ENCODE measurements at regions of chr9 and their contacts with region 1.

Region 1: GRCh38 chr9:3240656-3241268 is 285.0 kb downstream of the RFX3 start:
- DNase-seq: peak; percentile 34 to 72 (median 62)
- H3K4me3 ChIP-seq: peak overlapping the region in 1 of 3 experiments; percentile 10
- H3K4me3 Mint-ChIP-seq: peak overlapping the region in 1 of 2 donors; percentile 52
- H3K27ac ChIP-seq: peak overlapping the region in 1 of 2 donors; percentile 1
- H3K27ac Mint-ChIP-seq: peak overlapping the region in 4 of 7 donors; percentile 1 to 55 (median 32)
- H3K4me1 ChIP-seq: peaks cover 39 to 46% of the 10 kb centered on the region in 2 donors
- H3K4me1 Mint-ChIP-seq: peaks cover 50% of the 10 kb centered on the region
- H3K27me3 ChIP-seq: no peaks in the 10 kb centered on the region
- H3K27me3 Mint-ChIP-seq: peaks cover 0 to 2% (median 0%) of the 10 kb centered on the region in 3 donors
- CTCF ChIP-seq: peak; percentile 88

Region 2: GRCh38 chr9:3299872-3300271 is 59.1 kb after region 1 on chr9:
- intact Hi-C with region 1: loop called in 1 of 2 experiments (anchors 10 kb)
- DNase-seq: peak; percentile 62 to 76 (median 75)
- H3K4me3 ChIP-seq: peak overlapping the region in 1 of 3 experiments; percentile 17
- H3K4me3 Mint-ChIP-seq: peak overlapping the region in 1 of 2 donors; percentile 27
- H3K27ac ChIP-seq: peak overlapping the region in 1 of 2 donors; percentile 42
- H3K27ac Mint-ChIP-seq: peak overlapping the region in 4 of 7 donors; percentile 43 to 70 (median 64)
- H3K4me1 ChIP-seq: peaks cover 7 to 12% of the 10 kb centered on the region in 2 donors
- H3K4me1 Mint-ChIP-seq: peaks cover 16% of the 10 kb centered on the region
- H3K27me3 ChIP-seq: no peaks in the 10 kb centered on the region
- H3K27me3 Mint-ChIP-seq: no peaks in the 10 kb centered on the region
- CTCF ChIP-seq: no peak

Region 3: DNA sequence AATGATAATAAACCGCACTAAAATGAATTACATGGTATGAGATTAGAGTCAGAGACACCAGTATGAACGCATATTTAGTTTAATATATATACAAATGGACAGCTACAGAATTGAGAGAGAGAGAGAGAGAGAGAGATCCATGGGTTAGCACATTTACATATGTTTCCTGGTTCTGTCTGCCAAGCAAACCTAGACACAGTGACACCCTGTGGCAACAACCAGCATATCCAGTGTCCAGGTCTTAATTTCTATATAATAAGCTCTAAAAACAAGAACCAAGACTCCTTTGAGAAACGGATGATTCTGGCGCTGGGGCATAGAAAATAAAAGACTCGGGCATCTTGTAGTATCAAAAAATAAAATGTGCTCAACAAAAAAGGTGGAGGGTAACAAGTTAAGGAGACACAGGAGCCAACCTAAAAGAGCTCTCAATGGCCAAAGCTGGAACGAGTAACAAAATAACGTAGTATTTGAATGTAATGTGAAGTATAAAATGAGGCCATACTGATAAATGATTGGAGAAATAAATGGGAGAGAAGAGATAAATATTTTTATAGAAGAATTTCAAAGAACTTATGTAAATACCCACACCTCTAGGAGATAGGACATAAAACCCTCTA is 200.5 kb after region 1 on chr9:
- intact Hi-C with region 1: loop called (anchors 2 to 5 kb)
- DNase-seq: peak; percentile 59 to 73 (median 67)
- H3K4me3 ChIP-seq: no peak overlapping the region
- H3K4me3 Mint-ChIP-seq: no peak overlapping the region
- H3K27ac ChIP-seq: no peak overlapping the region
- H3K27ac Mint-ChIP-seq: no peak overlapping the region
- H3K4me1 ChIP-seq: no peaks in the 10 kb centered on the region
- H3K4me1 Mint-ChIP-seq: peaks cover 8% of the 10 kb centered on the region
- H3K27me3 ChIP-seq: no peaks in the 10 kb centered on the region
- H3K27me3 Mint-ChIP-seq: peaks cover 0 to 5% (median 0%) of the 10 kb centered on the region in 3 donors
- CTCF ChIP-seq: peak; percentile 80

Measured in CD14-positive monocyte (primary cell).